Left cardiac atrium (tissue), 4 donors: ENCODE measurements at regions of chr6 and their contacts with region 1.

Region 1: DNA sequence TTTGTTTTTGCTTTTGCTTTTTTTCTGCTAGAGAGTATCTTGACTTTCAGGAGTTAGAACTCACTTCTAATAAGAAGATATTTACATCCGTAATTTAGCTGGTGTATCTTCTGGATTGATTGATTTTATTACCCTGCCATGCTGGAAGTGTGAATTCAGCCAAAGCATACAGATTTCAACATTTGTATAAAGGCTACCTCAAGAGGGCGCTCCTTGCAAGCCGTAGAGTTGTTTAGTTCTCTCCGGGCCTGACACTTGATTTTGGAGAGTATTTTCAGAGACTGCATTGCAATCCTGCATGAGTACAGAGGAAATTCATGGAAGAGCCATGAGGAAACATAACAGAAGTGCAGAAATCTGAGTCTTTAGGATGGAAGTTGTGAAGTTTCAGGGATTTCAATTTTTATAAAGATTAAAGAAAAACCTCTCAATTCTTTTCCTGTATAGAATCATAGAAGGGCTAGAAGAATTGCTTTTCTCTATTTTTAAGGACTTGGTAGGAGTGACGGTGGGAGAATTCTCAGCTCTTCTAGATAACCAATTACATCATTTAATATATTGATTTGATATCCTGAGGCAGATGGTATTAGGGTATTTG is 66.7 kb upstream of the TIAM2 start:
- DNase-seq: peak; percentile 54
- ATAC-seq: peak; percentile 58 to 86

Region 2: GRCh38 chr6:154705471-154706113 is 222.8 kb before region 1 on chr6:
- intact Hi-C with region 1: no loop called
- DNase-seq: no peak
- ATAC-seq: peak in 1 of 2 donors; percentile 31

Region 3: DNA sequence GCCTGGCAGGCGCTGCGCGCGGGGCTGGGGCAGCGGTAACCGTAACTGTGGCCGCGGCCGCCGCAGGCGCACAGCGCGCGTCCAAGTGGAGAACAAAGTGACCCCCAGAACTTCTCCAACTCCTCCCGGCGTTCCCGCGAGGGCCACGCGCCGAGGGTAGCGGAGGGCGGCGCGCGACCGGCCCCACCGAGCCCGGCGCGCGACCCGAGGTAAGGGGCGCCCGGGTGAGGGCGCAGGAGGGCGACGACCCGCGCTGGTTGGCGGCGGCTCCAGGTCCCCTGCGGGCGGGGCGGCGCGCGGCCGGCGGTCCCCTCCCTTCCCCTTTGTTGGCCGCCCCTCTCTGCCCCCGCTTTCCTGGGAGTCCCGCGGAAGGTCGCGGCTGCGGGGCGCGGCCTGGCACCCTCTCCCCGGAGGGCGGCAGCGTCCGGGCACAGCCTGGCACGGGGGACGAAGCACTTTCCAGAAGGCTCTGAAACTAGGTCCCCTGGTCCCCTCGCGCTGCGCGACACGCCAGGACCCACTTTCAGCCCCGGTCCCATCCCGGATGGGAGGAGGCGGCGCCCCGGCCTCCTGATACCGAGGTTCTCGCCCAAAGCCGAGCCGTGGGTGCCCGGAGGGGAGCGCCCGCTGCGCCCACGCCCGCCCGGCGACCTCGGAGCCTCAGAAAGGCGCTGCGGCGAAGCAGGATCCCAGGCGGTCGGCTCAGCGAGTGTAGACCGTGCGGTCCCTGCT is 67.0 kb after region 1 on chr6 and contains the start of gene TIAM2:
- intact Hi-C with region 1: no loop called
- DNase-seq: peak; percentile 45
- ATAC-seq: peak; percentile 79 to 86
- total RNA-seq, gene TIAM2: 8.9 to 9.3 TPM

Region 4: GRCh38 chr6:155248008-155249001 is 319.9 kb after region 1 on chr6:
- intact Hi-C with region 1: loop called in 1 of 2 experiments (anchors 5 kb)
- DNase-seq: peak; percentile 40
- ATAC-seq: peak; percentile 79 to 82

Region 5: GRCh38 chr6:156167625-156168071 is 1239.2 kb after region 1 on chr6:
- intact Hi-C with region 1: no loop called
- DNase-seq: peak; percentile 37
- ATAC-seq: peak; percentile 78 to 81